Heart right ventricle (tissue), 16 donors: ENCODE measurements at regions of chr18 and their contacts with region 1.

Region 1: GRCh38 chr18:8525692-8526091 is 83.5 kb upstream of the RAB12 start:
- DNase-seq: no peak
- ATAC-seq: no peak
- H3K4me3 ChIP-seq: no peak overlapping the region
- H3K27ac ChIP-seq: no peak overlapping the region
- H3K4me1 ChIP-seq: no peaks in the 10 kb centered on the region
- H3K27me3 ChIP-seq: no peaks in the 10 kb centered on the region
- CTCF ChIP-seq: peak in 1 of 9 donors; percentile 15

Region 2: GRCh38 chr18:8329186-8329771 is 196.4 kb before region 1 on chr18:
- intact Hi-C with region 1: no loop called
- DNase-seq: no peak
- ATAC-seq: peak in 1 of 8 donors; percentile 67
- H3K4me3 ChIP-seq: no peak overlapping the region
- H3K27ac ChIP-seq: no peak overlapping the region
- H3K4me1 ChIP-seq: peaks cover 0 to 20% (median 0%) of the 10 kb centered on the region in 9 donors
- H3K27me3 ChIP-seq: no peaks in the 10 kb centered on the region
- CTCF ChIP-seq: no peak

Region 3: GRCh38 chr18:8571399-8571798 is 45.7 kb after region 1 on chr18:
- intact Hi-C with region 1: no loop called
- DNase-seq: no peak
- ATAC-seq: no peak
- H3K4me3 ChIP-seq: no peak overlapping the region
- H3K27ac ChIP-seq: no peak overlapping the region
- H3K4me1 ChIP-seq: no peaks in the 10 kb centered on the region
- H3K27me3 ChIP-seq: no peaks in the 10 kb centered on the region
- CTCF ChIP-seq: no peak

Region 4: GRCh38 chr18:8601277-8602032 is 75.8 kb after region 1 on chr18:
- intact Hi-C with region 1: loop called in 2 of 10 experiments (anchors 2 to 10 kb)
- DNase-seq: no peak
- ATAC-seq: no peak
- H3K4me3 ChIP-seq: no peak overlapping the region
- H3K27ac ChIP-seq: no peak overlapping the region
- H3K4me1 ChIP-seq: peaks cover 0 to 17% (median 0%) of the 10 kb centered on the region in 9 donors
- H3K27me3 ChIP-seq: peaks cover 0 to 3% (median 0%) of the 10 kb centered on the region in 7 donors
- CTCF ChIP-seq: no peak

Region 5: GRCh38 chr18:8608795-8609658 is 83.3 kb after region 1 on chr18 and contains the start of gene RAB12:
- intact Hi-C with region 1: loop called in 1 of 10 experiments (anchors 10 kb)
- DNase-seq: peak; percentile 87 to 91
- ATAC-seq: peak; percentile 87 to 97 (median 90)
- H3K4me3 ChIP-seq: peak within 1 kb of the TSS; percentile 68 to 97 (median 90)
- H3K27ac ChIP-seq: peak within 1 kb of the TSS; percentile 71 to 89 (median 81)
- H3K4me1 ChIP-seq: peaks cover 0 to 52% (median 37%) of the 10 kb centered on the region in 9 donors
- H3K27me3 ChIP-seq: no peaks in the 10 kb centered on the region
- CTCF ChIP-seq: peak; percentile 53 to 93 (median 72)
- total RNA-seq, gene RAB12: 90.1 to 121 (median 106) TPM

Region 6: DNA sequence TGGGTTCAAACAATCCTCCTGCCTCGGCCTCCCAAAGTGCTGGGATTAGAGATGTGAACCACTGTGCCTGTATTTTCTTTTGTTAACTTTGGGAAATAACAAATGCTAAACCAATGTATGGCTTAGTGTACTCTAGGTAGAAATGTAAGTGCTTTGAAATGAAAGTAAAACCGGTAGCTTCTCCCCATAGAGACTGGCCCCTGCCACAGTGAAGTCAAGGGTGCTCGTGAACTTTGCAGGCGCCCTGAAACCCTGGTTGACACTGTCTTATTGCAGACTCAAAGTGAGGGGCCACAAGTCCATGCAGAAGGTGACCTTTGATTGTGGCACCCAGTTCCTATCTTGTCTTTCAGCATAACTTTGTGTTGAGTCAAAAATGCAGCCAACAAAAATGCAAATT is 155.5 kb after region 1 on chr18:
- intact Hi-C with region 1: no loop called
- DNase-seq: no peak
- ATAC-seq: no peak
- H3K4me3 ChIP-seq: no peak overlapping the region
- H3K27ac ChIP-seq: no peak overlapping the region
- H3K4me1 ChIP-seq: no peaks in the 10 kb centered on the region
- H3K27me3 ChIP-seq: peaks cover 0 to 3% (median 0%) of the 10 kb centered on the region in 7 donors
- CTCF ChIP-seq: no peak